HCT116 (cell line): ENCODE measurements at regions of chrX and their contacts with region 1.

Region 1: GRCh38 chrX:70422851-70423341 is at the start of gene GDPD2:
- DNase-seq: no peak
- ATAC-seq: peak; percentile 90
- H3K4me3 ChIP-seq: no peak within 1 kb of the TSS
- H3K27ac ChIP-seq: no peak within 1 kb of the TSS
- H3K4me1 ChIP-seq: no peaks in the 10 kb centered on the region
- H3K27me3 ChIP-seq: no peaks in the 10 kb centered on the region
- CTCF ChIP-seq: peak; percentile 18 to 26 (median 23); a peak in 4 of 6 replicates
- POLR2A ChIP-seq: no peak
- RAD21 ChIP-seq: peak; percentile 52
- total RNA-seq, gene GDPD2: not detected

Region 2: GRCh38 chrX:70664726-70665125 is 241.8 kb after region 1 on chrX:
- CTCF ChIA-PET with region 1: interaction called, 15 read pairs
- POLR2A ChIA-PET with region 1: no interaction called
- RAD21 ChIA-PET with region 1: interaction called, 6 to 7 read pairs
- intact Hi-C with region 1: loop called (anchors 10 kb)
- DNase-seq: peak; percentile 16
- ATAC-seq: peak; percentile 54; the same call in 1 of the 2 replicates
- H3K4me3 ChIP-seq: no peak overlapping the region
- H3K27ac ChIP-seq: no peak overlapping the region
- H3K4me1 ChIP-seq: no peaks in the 10 kb centered on the region
- H3K27me3 ChIP-seq: no peaks in the 10 kb centered on the region
- CTCF ChIP-seq: peak; percentile 20 to 44 (median 35); a peak in 4 of 6 replicates
- POLR2A ChIP-seq: no peak
- RAD21 ChIP-seq: peak; percentile 70